A673 (cell line): ENCODE measurements at regions of chr1 and their contacts with region 1.

Region 1: DNA sequence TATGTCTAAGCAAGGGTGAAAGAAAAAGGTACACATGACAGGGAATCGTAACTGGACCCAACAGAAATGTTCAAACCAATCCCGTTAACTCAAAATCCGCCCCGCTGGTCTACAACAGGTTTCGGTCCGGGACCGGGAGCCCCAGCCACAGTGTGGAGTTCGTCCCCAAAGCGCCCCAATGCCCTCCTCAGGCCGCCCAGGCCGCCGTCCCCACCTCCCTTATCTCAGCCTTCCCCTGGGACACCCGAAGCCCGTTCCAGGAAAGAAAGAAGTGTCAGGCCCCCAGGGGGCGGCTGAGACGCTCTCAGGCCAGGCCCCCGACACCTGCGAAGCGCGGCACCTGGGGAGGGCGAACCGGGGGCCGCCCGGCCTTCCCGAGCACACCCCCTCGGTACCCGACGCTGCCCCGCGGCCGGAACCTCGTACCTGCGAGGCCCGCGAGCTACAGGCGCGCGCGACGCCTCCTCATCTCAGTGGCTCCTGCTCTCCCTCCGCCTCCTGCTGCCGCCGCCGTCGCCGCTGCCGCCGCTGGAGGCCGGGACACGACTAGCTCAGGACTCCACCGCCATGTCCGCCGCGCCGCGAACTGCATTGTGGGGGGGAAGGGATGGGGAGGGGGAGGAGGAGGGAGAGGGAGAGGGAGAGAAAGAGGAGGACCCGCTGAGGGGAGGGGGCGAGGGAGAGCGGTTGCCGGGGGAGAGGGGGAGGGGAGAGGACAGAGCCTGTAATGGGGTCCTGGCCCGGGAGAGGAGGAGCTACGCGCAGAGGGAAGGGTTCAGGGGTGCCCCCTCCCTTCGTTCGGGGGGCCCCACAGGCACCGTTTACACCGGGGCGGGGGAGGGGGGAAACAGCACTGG is at the start of gene TUT4:
- DNase-seq: peak; percentile 95
- H3K4me3 ChIP-seq: peak within 1 kb of the TSS; percentile 96
- H3K27ac ChIP-seq: peak within 1 kb of the TSS; percentile 91
- H3K4me1 ChIP-seq: peaks cover 13% of the 10 kb centered on the region
- H3K27me3 ChIP-seq: no peaks in the 10 kb centered on the region
- CTCF ChIP-seq: no peak
- total RNA-seq, gene TUT4: 71.2 and 81.3 TPM in 2 replicates

Region 2: DNA sequence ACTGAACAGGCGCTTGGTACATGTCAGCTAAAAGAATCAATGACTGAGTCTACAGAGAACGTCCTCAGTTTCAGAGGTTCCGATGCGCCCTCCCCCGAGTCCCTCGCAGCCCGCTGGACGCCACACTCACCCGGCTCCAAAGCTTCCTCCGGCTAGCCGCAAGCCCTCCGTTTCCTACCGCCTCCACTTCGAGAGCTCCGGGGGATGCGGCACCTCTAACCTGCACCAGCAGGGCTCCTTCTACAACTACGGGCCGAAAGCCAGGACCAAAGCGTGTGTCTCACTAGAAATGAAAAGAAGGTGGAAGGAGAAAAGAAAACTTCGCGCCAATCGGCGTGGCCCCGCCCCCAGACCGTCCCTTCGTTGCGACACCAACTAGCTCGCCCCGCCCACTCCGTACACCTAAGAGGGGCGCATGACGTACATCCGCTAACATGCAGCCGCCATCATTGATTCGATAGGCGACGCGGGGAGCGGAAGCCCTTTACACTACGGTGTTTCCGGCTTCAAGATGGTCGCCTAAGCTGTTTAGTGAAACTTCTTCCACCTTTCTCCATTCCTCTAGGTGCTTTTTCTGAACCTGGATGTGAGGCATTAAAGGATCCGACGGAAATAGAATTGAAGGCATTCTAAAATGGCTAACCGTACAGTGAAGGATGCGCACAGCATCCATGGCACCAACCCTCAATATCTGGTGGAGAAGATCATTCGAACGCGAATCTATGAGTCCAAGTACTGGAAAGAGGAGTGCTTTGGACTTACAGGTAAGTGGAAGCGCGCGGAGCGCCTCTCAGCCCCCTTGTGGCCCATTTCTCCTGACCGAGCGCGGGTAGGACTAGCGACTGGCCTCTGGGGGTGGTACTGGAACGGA is 148.4 kb before region 1 on chr1 and contains the starts of genes ORC1 and PRPF38A:
- CTCF ChIA-PET with region 1: no interaction called
- POLR2A ChIA-PET with region 1: interaction called, 10 read pairs
- intact Hi-C with region 1: no loop called
- DNase-seq: peak; percentile 99
- H3K4me3 ChIP-seq: peak within 1 kb of the TSS; percentile 83
- H3K27ac ChIP-seq: peak within 1 kb of the TSS; percentile 95
- H3K4me1 ChIP-seq: peaks cover 13% of the 10 kb centered on the region
- H3K27me3 ChIP-seq: no peaks in the 10 kb centered on the region
- CTCF ChIP-seq: peak; percentile 38
- total RNA-seq, gene ORC1: 50.4 and 54.0 TPM in 2 replicates
- total RNA-seq, gene PRPF38A: 83.2 and 95.7 TPM in 2 replicates

Region 3: GRCh38 chr1:52424231-52424636 is 128.5 kb before region 1 on chr1:
- CTCF ChIA-PET with region 1: no interaction called
- POLR2A ChIA-PET with region 1: no interaction called
- intact Hi-C with region 1: loop called (anchors 5 kb)
- DNase-seq: no peak
- H3K4me3 ChIP-seq: no peak overlapping the region
- H3K27ac ChIP-seq: peak overlapping the region; percentile 10
- H3K4me1 ChIP-seq: peaks cover 29% of the 10 kb centered on the region
- H3K27me3 ChIP-seq: no peaks in the 10 kb centered on the region
- CTCF ChIP-seq: no peak

Region 4: DNA sequence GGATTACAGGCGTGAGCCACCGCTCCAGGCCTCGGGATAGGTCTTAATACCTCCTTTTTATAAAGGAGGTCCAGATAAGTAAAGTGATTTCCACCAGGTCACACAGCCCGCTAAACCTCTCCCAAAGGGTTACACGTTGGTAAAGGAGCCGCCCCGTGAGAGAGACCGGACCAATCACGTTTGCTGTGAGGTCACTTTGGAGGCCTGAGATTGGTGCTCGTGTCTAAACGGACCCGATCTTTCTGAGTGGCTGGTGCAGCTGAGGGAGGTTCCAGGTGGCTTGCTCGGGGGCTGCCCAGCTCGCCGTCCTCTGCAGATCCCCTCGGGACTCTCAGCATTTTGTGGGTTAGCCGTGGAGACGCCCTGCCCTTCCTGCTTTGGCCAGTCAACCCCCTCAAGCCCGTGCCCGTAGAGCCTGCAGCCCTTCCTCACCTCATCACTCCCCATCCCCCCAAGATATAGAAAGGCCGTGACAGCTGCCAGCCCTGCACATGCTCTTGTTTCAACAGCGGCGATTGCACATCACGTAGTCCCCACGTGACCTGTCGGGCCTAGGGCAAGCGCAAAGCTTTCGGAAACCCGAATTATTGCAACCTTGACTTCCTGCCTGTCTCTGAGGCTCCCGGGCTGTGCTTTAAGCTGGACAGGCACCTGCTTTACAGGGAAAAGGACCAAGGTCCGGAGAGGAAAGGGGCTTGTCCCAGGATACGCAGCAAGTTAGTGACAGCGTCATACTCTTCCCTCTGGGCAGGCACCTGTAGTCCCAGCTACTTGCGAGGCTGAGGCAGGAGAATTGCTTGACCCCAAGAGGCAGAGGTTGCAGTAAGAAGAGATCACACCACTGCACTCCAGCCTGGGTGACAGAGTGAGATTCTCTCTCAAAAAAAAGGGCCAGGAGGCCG is 150.4 kb after region 1 on chr1:
- CTCF ChIA-PET with region 1: no interaction called
- POLR2A ChIA-PET with region 1: no interaction called
- intact Hi-C with region 1: no loop called
- DNase-seq: peak; percentile 78
- H3K4me3 ChIP-seq: peak overlapping the region; percentile 33
- H3K27ac ChIP-seq: no peak overlapping the region
- H3K4me1 ChIP-seq: peaks cover 4% of the 10 kb centered on the region
- H3K27me3 ChIP-seq: no peaks in the 10 kb centered on the region
- CTCF ChIP-seq: no peak